Activated CD4-positive, alpha-beta T cell treated with anti-CD3 and anti-CD28 coated beads for 36 hours (primary cell): ENCODE measurements at regions of chr2 and their contacts with region 1.

Region 1: DNA sequence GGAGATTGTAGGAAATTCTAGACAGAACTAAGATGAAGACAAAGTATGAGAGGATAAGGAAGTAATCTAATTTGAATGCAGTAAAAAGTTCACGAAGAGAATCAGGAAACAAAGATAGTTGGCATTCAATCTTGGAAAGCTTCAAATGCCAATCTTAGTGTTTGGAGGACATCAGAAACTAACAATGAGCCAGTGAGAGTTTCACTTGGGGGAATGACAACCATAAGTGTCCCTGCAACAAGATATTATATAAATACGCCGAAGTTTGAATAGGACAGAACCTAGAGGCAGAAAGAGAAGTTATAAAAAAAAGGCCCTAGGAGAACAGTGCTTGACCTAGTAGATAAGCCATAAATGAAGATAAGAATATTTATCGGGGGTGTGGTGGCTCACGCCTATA is 11.1 kb downstream of the SNRPG start:
- DNase-seq: no peak
- ATAC-seq: no peak
- H3K4me3 Mint-ChIP-seq: no peak overlapping the region
- H3K27ac Mint-ChIP-seq: peak overlapping the region; percentile 75
- H3K4me1 Mint-ChIP-seq: peaks cover 37% of the 10 kb centered on the region
- H3K27me3 Mint-ChIP-seq: no peaks in the 10 kb centered on the region

Region 2: GRCh38 chr2:69829256-69830046 is 453.0 kb before region 1 on chr2 and contains the start of gene GMCL1:
- CTCF ChIA-PET with region 1: no interaction called
- POLR2A ChIA-PET with region 1: no interaction called
- intact Hi-C with region 1: no loop called
- DNase-seq: peak; percentile 99
- ATAC-seq: peak; percentile 96
- H3K4me3 Mint-ChIP-seq: peak within 1 kb of the TSS; percentile 83
- H3K27ac Mint-ChIP-seq: peak within 1 kb of the TSS; percentile 94
- H3K4me1 Mint-ChIP-seq: peaks cover 49% of the 10 kb centered on the region
- H3K27me3 Mint-ChIP-seq: no peaks in the 10 kb centered on the region
- total RNA-seq, gene GMCL1: 14.5 to 20.3 TPM

Region 3: DNA sequence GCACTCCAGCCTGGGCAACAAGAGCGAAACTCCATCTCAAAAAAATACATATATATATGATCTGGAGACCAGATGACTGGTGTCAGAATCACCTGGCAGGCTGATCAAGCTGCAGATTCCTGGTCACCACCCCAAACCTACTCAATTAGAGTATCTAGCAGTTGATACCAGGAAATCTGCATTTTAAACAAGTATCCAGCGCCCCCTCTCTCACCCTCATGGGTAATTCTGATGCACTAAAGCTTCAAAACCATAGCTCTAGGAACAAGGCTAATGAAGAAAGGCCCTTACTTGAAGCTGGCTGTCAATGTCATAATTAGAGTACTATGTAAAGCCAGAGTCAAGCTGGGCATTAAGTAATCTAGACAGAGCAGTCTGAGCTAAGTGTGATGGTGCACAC is 220.2 kb before region 1 on chr2:
- CTCF ChIA-PET with region 1: no interaction called
- POLR2A ChIA-PET with region 1: interaction called, 11 read pairs
- intact Hi-C with region 1: no loop called
- DNase-seq: no peak
- ATAC-seq: peak; percentile 39
- H3K4me3 Mint-ChIP-seq: no peak overlapping the region
- H3K27ac Mint-ChIP-seq: no peak overlapping the region
- H3K4me1 Mint-ChIP-seq: peaks cover 6% of the 10 kb centered on the region
- H3K27me3 Mint-ChIP-seq: no peaks in the 10 kb centered on the region

Region 4: DNA sequence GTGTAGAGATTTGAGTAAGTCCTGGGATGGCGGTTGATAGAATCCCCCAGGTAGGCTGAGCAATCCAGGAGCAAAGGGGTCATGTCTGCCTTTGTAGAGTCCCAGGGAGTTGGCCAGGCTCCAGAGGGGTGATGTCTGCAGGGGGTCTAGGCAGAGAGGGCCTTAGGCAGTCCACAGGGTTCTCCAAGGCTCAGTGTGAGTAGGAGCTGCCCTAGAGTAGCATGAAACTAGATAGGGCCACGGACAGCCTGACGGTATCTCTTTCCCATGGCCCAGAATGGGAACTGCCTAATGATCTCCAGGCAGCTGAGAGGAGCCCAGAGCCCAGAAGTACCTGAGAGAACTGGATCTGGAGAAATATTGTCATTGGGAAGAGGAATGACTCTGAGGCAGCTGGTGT is 28.5 kb after region 1 on chr2:
- CTCF ChIA-PET with region 1: no interaction called
- POLR2A ChIA-PET with region 1: no interaction called
- intact Hi-C with region 1: no loop called
- DNase-seq: no peak
- ATAC-seq: no peak
- H3K4me3 Mint-ChIP-seq: no peak overlapping the region
- H3K27ac Mint-ChIP-seq: no peak overlapping the region
- H3K4me1 Mint-ChIP-seq: no peaks in the 10 kb centered on the region
- H3K27me3 Mint-ChIP-seq: peaks cover 3% of the 10 kb centered on the region